CD8-positive, alpha-beta T cell (primary cell): ENCODE measurements at regions of chr9 and their contacts with region 1.

Region 1: GRCh38 chr9:127734747-127735529 is at the start of gene TOR2A:
- DNase-seq: peak; percentile 98 to 100 (median 99)
- ATAC-seq: peak; percentile 94
- H3K4me3 ChIP-seq: peak within 1 kb of the TSS; percentile 67 to 79
- H3K4me3 Mint-ChIP-seq: peak within 1 kb of the TSS; percentile 91
- H3K27ac ChIP-seq: peak within 1 kb of the TSS; percentile 59 to 87
- H3K27ac Mint-ChIP-seq: peak within 1 kb of the TSS; percentile 86
- H3K4me1 ChIP-seq: peaks cover 18% of the 10 kb centered on the region
- H3K4me1 Mint-ChIP-seq: peaks cover 7% of the 10 kb centered on the region
- H3K27me3 ChIP-seq: no peaks in the 10 kb centered on the region
- H3K27me3 Mint-ChIP-seq: no peaks in the 10 kb centered on the region
- CTCF ChIP-seq: peak; percentile 80
- total RNA-seq, gene TOR2A: 4.7 to 5.3 TPM

Region 2: DNA sequence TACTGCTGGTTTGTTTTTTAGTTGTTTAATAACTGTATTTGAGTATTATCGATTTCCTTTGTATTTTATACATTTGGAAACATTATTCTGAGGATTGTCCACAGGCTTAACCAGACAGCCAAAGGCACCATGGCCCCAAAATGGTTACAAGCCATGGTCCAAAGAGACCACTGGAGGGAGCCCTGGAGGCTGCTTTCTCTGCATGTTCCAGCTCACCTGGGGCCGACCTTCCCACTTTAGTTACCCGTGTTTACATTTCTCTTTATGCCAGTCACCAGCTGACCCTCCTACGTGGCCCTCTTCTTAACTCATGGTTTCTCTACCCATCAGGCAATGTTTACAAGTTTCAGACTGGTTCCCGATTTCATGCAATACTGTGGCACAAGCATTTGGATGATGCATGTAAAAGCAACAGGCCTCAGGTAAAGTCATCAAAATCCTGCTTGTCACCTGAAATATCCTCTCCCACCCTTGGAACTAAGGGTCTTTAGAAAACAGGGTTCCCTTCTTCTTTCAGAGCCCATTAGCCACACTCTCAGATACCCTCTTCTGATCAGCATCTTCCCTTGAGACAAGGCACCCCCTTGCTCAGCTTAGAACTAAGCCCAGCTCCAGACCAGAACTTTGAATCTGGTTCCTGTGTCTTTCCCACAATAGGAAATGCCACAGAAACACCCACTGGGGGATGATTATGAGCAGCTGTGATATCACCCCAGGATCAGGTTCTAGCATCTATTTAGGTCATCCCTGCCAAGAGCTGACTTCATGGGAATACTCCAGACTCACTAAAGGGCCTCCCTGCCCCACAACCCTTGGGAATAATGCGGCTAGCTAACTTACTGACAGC is 520.3 kb before region 1 on chr9:
- CTCF ChIA-PET with region 1: no interaction called
- POLR2A ChIA-PET with region 1: no interaction called
- intact Hi-C with region 1: loop called in 1 of 2 experiments (anchors 2 kb)
- DNase-seq: peak; percentile 36 to 73 (median 64)
- ATAC-seq: peak; percentile 93
- H3K4me3 ChIP-seq: no peak overlapping the region
- H3K4me3 Mint-ChIP-seq: no peak overlapping the region
- H3K27ac ChIP-seq: no peak overlapping the region
- H3K27ac Mint-ChIP-seq: no peak overlapping the region
- H3K4me1 ChIP-seq: no peaks in the 10 kb centered on the region
- H3K4me1 Mint-ChIP-seq: peaks cover 3% of the 10 kb centered on the region
- H3K27me3 ChIP-seq: no peaks in the 10 kb centered on the region
- H3K27me3 Mint-ChIP-seq: peaks cover 8% of the 10 kb centered on the region
- CTCF ChIP-seq: peak; percentile 69

Region 3: GRCh38 chr9:127293328-127293727 is 441.6 kb before region 1 on chr9:
- CTCF ChIA-PET with region 1: no interaction called
- POLR2A ChIA-PET with region 1: no interaction called
- intact Hi-C with region 1: no loop called
- DNase-seq: no peak
- ATAC-seq: no peak
- H3K4me3 ChIP-seq: no peak overlapping the region
- H3K4me3 Mint-ChIP-seq: no peak overlapping the region
- H3K27ac ChIP-seq: no peak overlapping the region
- H3K27ac Mint-ChIP-seq: no peak overlapping the region
- H3K4me1 ChIP-seq: no peaks in the 10 kb centered on the region
- H3K4me1 Mint-ChIP-seq: no peaks in the 10 kb centered on the region
- H3K27me3 ChIP-seq: no peaks in the 10 kb centered on the region
- H3K27me3 Mint-ChIP-seq: peaks cover 22% of the 10 kb centered on the region
- CTCF ChIP-seq: no peak

Region 4: DNA sequence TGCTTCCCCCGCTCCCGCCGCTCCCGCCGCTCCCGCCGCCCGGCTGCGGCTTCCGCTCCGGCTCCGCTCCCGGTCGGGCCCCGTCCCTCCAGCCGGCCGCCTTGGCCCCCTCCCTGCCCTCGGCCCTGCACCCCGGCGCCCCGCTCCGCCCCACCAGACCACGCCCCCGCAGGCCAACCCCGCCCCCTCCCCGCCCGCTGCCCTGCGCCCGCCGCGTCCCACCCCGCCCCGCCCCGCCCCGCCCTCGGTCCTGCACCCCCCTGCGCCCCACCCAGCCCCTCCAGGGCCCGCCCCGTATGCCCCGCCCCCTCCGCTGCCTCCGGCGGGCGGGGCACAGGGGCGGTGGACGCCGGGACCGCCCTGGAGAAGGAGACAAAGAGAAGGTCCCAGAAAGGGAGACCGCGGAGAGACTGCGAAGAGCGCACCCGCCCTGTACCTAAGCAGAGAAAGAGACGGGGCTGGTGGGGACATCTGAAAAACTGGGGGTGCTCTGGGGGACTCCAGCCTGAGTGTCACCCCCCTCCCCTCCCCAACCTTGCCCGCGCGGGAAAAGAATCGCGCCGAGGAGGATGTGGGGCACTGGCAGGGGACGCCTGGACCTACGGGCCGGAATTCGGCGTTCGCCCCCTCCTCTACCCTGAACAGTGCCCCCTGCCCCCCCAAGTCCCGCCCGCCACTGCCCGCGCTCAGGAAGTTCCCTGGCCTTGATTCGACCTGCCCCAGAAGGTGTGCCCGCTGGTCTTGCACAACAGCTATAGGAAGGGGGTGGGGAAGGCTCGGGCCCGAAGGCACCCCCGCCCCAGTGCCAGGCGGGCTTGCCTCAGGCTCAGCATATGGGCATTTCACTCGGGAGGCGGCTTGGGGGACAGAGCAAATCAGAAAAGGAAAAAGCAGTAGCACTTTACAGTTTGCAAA is 165.7 kb before region 1 on chr9:
- CTCF ChIA-PET with region 1: no interaction called
- POLR2A ChIA-PET with region 1: no interaction called
- intact Hi-C with region 1: loop called in 1 of 2 experiments (anchors 1 kb)
- DNase-seq: peak; percentile 49 to 87 (median 73)
- ATAC-seq: peak; percentile 85
- H3K4me3 ChIP-seq: peak overlapping the region; percentile 63 to 65
- H3K4me3 Mint-ChIP-seq: peak overlapping the region; percentile 83
- H3K27ac ChIP-seq: peak overlapping the region; percentile 4 to 21
- H3K27ac Mint-ChIP-seq: peak overlapping the region; percentile 87
- H3K4me1 ChIP-seq: peaks cover 30% of the 10 kb centered on the region
- H3K4me1 Mint-ChIP-seq: peaks cover 20% of the 10 kb centered on the region
- H3K27me3 ChIP-seq: no peaks in the 10 kb centered on the region
- H3K27me3 Mint-ChIP-seq: no peaks in the 10 kb centered on the region
- CTCF ChIP-seq: no peak

Region 5: GRCh38 chr9:127715394-127716337 is 19.3 kb before region 1 on chr9 and contains the starts of genes PTRH1 and TTC16:
- CTCF ChIA-PET with region 1: interaction called, 42 read pairs
- POLR2A ChIA-PET with region 1: interaction called, 10 read pairs
- intact Hi-C with region 1: loop called (anchors 1 kb)
- DNase-seq: peak; percentile 88 to 98 (median 97)
- ATAC-seq: peak; percentile 93
- H3K4me3 ChIP-seq: peak within 1 kb of the TSS; percentile 88 to 96
- H3K4me3 Mint-ChIP-seq: peak within 1 kb of the TSS; percentile 98
- H3K27ac ChIP-seq: peak within 1 kb of the TSS; percentile 80 to 83
- H3K27ac Mint-ChIP-seq: peak within 1 kb of the TSS; percentile 96
- H3K4me1 ChIP-seq: peaks cover 47% of the 10 kb centered on the region
- H3K4me1 Mint-ChIP-seq: peaks cover 44% of the 10 kb centered on the region
- H3K27me3 ChIP-seq: no peaks in the 10 kb centered on the region
- H3K27me3 Mint-ChIP-seq: no peaks in the 10 kb centered on the region
- CTCF ChIP-seq: no peak
- total RNA-seq, gene PTRH1: 4.6 to 5.3 TPM
- total RNA-seq, gene TTC16: 5.2 to 5.5 TPM

Region 6: DNA sequence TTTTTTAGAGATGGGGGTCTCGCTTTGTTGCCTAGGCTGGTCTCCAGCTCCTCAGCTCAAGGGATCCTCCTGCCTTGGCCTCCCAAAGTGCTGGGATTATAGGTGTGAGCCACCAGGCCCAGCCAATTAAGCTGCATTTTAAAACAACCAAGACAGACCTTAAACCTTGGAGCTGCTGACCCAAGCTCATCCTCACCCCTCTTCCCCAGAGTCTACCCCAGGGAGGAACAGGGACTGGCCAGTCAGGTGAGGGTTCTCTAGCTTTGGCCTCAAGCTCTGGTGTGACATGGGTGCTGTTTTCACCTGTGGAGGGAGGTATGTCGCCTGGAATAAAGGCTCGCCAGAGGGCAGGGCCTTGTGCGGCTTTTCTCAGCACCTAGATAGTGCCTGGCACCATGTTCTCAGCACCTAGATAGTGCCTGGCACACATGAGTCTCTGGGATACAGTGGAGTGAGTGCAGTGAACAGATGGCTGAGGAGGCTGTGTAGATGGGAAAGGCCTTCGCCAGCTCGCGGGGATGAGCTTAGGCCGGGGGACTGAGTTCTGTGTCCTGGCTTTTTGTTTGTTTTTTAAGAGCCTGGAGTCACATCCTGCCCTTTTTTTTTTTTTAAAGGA is 58.3 kb after region 1 on chr9:
- CTCF ChIA-PET with region 1: interaction called, 11 read pairs
- POLR2A ChIA-PET with region 1: no interaction called
- intact Hi-C with region 1: no loop called
- DNase-seq: no peak
- ATAC-seq: no peak
- H3K4me3 ChIP-seq: no peak overlapping the region
- H3K4me3 Mint-ChIP-seq: no peak overlapping the region
- H3K27ac ChIP-seq: no peak overlapping the region
- H3K27ac Mint-ChIP-seq: no peak overlapping the region
- H3K4me1 ChIP-seq: peaks cover 26% of the 10 kb centered on the region
- H3K4me1 Mint-ChIP-seq: peaks cover 33% of the 10 kb centered on the region
- H3K27me3 ChIP-seq: no peaks in the 10 kb centered on the region
- H3K27me3 Mint-ChIP-seq: no peaks in the 10 kb centered on the region
- CTCF ChIP-seq: no peak

Region 7: GRCh38 chr9:128127990-128128835 is 393.3 kb after region 1 on chr9:
- CTCF ChIA-PET with region 1: no interaction called
- POLR2A ChIA-PET with region 1: no interaction called
- intact Hi-C with region 1: loop called in 1 of 2 experiments (anchors 1 kb)
- DNase-seq: peak; percentile 69 to 95 (median 83)
- ATAC-seq: peak; percentile 81
- H3K4me3 ChIP-seq: peak overlapping the region; percentile 99 to 100
- H3K4me3 Mint-ChIP-seq: peak overlapping the region; percentile 99
- H3K27ac ChIP-seq: peak overlapping the region; percentile 99
- H3K27ac Mint-ChIP-seq: peak overlapping the region; percentile 99
- H3K4me1 ChIP-seq: peaks cover 31% of the 10 kb centered on the region
- H3K4me1 Mint-ChIP-seq: peaks cover 38% of the 10 kb centered on the region
- H3K27me3 ChIP-seq: no peaks in the 10 kb centered on the region
- H3K27me3 Mint-ChIP-seq: peaks cover 2% of the 10 kb centered on the region
- CTCF ChIP-seq: no peak